Caco-2 (cell line): ENCODE measurements at regions of chr14 and their contacts with region 1.

Region 1: DNA sequence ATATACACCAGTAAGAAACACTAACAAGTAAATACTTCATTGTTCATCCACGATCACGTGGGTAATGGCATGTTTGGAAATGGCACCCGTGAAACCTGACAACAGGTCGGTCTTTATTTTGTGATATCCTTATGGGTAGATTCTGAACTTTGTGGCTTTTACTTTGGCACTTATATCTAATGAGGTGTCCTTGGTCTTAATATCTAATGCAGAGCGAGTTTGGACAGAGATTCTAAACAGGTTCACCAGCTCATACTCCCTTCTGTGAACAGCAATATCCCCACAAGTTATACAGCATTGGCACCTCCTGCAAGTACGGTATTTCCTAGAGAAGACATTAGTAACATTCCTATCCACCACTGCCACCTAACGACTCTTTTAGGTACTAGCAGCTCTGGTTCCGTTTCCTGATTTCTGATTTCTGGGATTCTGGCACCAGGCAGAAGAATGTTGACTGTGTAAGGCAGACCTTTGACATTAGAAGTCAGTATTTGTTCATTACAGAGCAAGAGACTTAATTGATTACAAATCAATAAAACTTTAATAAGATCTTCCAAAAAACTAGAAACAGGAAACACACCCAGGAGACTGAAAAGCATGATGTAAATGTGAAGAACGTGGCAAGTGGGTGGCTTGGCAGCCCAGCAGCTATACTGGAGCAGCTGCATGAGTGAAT is 2.4 kb downstream of the ANG start:
- DNase-seq: peak; percentile 49 to 66
- H3K4me3 ChIP-seq: no peak overlapping the region
- H3K4me3 Mint-ChIP-seq: peak overlapping the region; percentile 31
- H3K27ac Mint-ChIP-seq: peak overlapping the region; percentile 55
- H3K4me1 ChIP-seq: peaks cover 33% of the 10 kb centered on the region
- H3K4me1 Mint-ChIP-seq: peaks cover 20% of the 10 kb centered on the region
- H3K27me3 ChIP-seq: no peaks in the 10 kb centered on the region
- H3K27me3 Mint-ChIP-seq: no peaks in the 10 kb centered on the region
- CTCF ChIP-seq: peak; percentile 62 to 75

Region 2: DNA sequence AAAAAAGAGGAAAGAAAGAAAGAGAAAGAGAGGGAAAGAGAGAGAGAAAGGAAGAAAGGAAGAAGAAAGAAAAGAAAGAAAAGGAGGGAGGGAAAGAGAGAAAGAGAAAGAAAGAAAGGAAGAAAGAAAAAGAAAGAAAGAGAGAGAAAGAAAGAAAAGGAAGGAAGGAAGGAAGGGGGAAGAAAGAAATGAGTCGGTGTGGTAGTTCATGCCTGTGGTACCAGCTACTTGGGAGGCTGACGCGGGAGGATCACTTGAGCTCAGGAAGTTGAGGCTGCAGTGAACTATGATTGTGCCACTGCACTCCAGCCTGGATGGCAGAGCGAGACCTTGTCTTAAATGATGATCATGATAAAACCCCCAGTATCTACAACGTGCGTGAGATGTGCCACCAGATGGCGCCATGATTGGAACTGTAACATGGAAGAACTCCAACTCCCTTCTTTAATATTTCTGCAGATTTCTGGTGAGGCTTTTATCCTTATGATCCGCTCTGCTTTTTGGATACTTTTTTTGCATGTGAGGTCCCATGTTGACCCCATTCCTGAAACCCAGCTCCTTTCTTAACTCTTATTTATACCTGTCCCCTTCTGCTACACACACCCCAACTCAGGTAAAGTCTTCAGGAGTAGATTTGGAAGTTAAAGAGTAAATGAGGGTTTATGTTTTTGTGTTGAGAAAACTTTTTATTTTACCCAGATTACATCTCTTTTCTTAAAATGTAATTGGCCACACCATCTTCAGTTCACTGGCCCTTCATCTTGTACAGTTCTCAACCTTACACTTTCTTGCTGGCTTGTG is 160.0 kb before region 1 on chr14:
- CTCF ChIA-PET with region 1: no interaction called
- POLR2A ChIA-PET with region 1: no interaction called
- intact Hi-C with region 1: loop called (anchors 2 kb)
- DNase-seq: peak; percentile 77 to 78
- H3K4me3 ChIP-seq: no peak overlapping the region
- H3K4me3 Mint-ChIP-seq: peak overlapping the region; percentile 18
- H3K27ac Mint-ChIP-seq: no peak overlapping the region
- H3K4me1 ChIP-seq: no peaks in the 10 kb centered on the region
- H3K4me1 Mint-ChIP-seq: peaks cover 13% of the 10 kb centered on the region
- H3K27me3 ChIP-seq: no peaks in the 10 kb centered on the region
- H3K27me3 Mint-ChIP-seq: peaks cover 26% of the 10 kb centered on the region
- CTCF ChIP-seq: peak; percentile 65 to 83

Region 3: DNA sequence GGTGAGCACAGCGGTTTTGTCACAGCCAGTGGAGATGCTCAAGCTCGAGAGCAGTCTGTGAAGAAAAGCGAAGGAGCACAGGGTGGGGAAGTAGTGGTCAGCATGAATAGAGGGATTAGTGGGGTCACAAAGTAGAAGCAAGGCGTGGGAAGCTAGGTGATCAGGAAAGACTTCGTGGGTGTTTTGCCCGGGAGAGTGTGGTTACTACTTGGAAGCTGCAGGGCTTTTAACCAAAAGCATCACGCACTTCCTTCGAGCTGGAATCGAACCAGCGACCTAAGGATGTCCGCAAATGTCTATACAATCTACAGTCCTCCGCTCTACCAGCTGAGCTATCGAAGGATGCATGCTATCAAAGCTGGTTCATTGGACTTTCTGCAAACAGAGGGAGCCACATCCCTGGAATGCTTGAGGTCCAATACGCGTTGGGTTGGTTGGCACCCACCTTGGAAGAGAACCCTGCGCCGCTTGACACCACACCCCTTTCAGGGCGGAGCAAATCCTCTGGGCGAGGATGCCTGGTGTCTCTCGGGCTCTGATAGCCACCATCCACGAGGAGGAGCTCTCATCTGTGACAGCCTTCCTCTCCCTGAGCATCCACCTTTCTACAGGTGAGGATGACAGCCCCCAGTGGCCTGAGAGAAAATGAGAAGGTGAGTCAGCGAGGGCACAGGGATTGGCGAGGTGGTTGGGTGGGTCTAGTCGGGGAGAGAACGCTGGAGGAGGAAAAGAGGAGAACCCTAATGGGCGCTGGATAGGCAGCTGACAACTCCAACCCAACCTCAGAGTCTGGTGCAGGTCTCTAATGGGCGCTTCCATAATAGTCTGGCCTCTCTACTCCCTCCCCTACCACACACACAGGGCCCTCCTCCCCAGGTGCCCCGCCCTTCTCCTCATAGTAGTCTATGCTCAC is 33.5 kb before region 1 on chr14:
- CTCF ChIA-PET with region 1: interaction called, 17 read pairs
- POLR2A ChIA-PET with region 1: no interaction called
- intact Hi-C with region 1: loop called (anchors 1 kb)
- DNase-seq: peak; percentile 77 to 80
- H3K4me3 ChIP-seq: no peak overlapping the region
- H3K4me3 Mint-ChIP-seq: peak overlapping the region; percentile 68
- H3K27ac Mint-ChIP-seq: no peak overlapping the region
- H3K4me1 ChIP-seq: peaks cover 6% of the 10 kb centered on the region; the same call in 1 of the 2 replicates
- H3K4me1 Mint-ChIP-seq: peaks cover 12% of the 10 kb centered on the region
- H3K27me3 ChIP-seq: no peaks in the 10 kb centered on the region
- H3K27me3 Mint-ChIP-seq: no peaks in the 10 kb centered on the region
- CTCF ChIP-seq: peak; percentile 53 to 81

Region 4: DNA sequence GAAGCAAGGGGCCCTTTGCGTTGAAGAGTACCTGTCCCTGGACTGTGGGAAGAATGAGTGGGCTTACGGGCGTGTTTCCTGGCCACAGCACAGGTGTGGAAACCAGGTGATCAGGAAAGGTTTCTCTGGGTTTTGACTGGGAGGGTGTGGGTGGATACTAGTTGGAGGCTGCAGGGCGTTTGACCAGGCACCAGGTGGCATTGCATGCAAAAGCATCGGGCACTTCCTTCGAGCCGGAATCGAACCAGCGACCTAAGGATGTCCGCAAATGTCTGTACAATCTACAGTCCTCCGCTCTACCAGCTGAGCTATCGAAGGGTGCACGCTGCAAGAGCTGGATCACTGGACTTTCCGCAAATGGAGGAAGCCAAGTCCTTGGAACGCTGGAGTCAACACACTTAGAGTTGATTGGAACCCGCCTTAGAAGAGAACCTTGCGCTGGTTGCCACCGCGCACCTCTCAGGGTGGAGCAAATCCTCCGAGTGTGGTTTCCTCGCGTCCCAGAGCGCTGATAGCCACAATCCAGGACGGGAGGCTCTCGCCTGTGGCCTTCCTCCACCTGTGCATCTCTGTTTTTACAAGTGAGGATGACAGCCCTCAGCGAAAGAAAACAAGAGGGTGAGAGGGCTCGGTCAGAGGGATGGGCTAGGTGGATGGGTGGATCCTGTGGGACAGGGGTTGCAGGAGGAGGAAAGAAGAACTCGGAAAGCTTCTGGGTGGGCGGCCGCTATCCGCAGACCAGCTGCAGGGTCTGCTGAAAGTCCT is 27.8 kb before region 1 on chr14:
- CTCF ChIA-PET with region 1: interaction called, 17 read pairs
- POLR2A ChIA-PET with region 1: no interaction called
- intact Hi-C with region 1: loop called (anchors 1 kb)
- DNase-seq: peak in 1 of 2 experiments; percentile 32
- H3K4me3 ChIP-seq: no peak overlapping the region
- H3K4me3 Mint-ChIP-seq: no peak overlapping the region
- H3K27ac Mint-ChIP-seq: no peak overlapping the region
- H3K4me1 ChIP-seq: peaks cover 7% of the 10 kb centered on the region; the same call in 1 of the 2 replicates
- H3K4me1 Mint-ChIP-seq: no peaks in the 10 kb centered on the region
- H3K27me3 ChIP-seq: no peaks in the 10 kb centered on the region
- H3K27me3 Mint-ChIP-seq: no peaks in the 10 kb centered on the region
- CTCF ChIP-seq: peak in 1 of 2 experiments; percentile 10

Region 5: GRCh38 chr14:20711670-20712069 is 20.7 kb after region 1 on chr14:
- CTCF ChIA-PET with region 1: no interaction called
- POLR2A ChIA-PET with region 1: no interaction called
- intact Hi-C with region 1: no loop called
- DNase-seq: no peak
- H3K4me3 ChIP-seq: no peak overlapping the region
- H3K4me3 Mint-ChIP-seq: no peak overlapping the region
- H3K27ac Mint-ChIP-seq: no peak overlapping the region
- H3K4me1 ChIP-seq: peaks cover 13% of the 10 kb centered on the region
- H3K4me1 Mint-ChIP-seq: no peaks in the 10 kb centered on the region
- H3K27me3 ChIP-seq: no peaks in the 10 kb centered on the region
- H3K27me3 Mint-ChIP-seq: no peaks in the 10 kb centered on the region
- CTCF ChIP-seq: no peak

Region 6: GRCh38 chr14:21168055-21168454 is 477.1 kb after region 1 on chr14:
- CTCF ChIA-PET with region 1: no interaction called
- POLR2A ChIA-PET with region 1: no interaction called
- intact Hi-C with region 1: no loop called
- DNase-seq: no peak
- H3K4me3 ChIP-seq: no peak overlapping the region
- H3K4me3 Mint-ChIP-seq: no peak overlapping the region
- H3K27ac Mint-ChIP-seq: no peak overlapping the region
- H3K4me1 ChIP-seq: no peaks in the 10 kb centered on the region
- H3K4me1 Mint-ChIP-seq: no peaks in the 10 kb centered on the region
- H3K27me3 ChIP-seq: no peaks in the 10 kb centered on the region
- H3K27me3 Mint-ChIP-seq: peaks cover 13% of the 10 kb centered on the region
- CTCF ChIP-seq: no peak